ENCODE measurements at regions of chr12 and their contacts with region 1.

Region 1: DNA sequence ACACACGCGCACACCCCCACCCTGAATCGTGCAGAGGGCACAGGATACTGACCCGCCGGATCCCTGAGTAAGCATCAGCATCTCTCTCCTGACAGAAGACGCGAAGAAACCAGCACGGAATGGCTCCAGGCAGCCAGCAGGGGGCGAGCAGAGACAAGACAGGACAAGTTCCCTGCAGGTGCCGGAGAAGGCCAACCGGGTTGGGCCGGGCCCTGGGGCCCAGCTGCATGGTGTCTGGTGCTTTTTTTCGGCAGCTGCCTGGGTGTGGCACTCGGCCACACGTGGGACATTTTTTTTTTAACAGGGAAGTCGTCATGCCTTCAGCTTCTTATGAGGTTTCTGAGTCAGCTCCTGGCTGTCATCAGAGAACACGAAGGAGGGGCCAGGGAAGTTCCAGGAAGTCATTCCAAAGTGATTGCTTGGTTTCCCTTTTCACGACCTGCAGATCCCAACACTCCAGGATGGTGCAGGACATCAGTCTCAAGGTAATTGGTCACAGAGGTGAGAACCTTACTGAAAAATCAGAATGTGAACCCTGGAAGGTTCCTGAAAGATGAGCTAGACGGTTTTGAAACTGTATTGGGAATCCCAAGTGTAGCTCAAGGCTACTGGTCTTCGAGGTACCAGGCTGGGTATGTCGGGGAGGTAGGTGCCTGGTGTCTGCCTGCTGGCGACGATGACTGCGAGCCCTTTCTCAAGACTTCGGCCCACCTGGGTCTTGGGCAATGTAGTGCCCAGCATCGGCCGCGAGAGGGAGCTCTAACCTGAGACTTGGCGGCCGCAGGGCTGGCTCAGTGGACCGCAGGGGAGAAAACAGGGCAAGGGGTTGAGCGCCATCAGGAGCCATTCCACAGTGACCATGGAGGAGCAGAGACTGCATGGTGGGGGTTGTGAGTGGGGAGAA is 190.8 kb upstream of the PRMT8 start:
- DNase-seq: peak; percentile 89
- H3K4me3 ChIP-seq: peak overlapping the region; percentile 15 to 56; a peak in 3 of 4 replicates
- H3K27ac ChIP-seq: peak overlapping the region in 1 of 2 experiments; percentile 69; a peak in 2 of 4 replicates
- H3K4me1 ChIP-seq: peaks cover 4 to 39% of the 10 kb centered on the region in 2 experiments; a peak in 3 of 4 replicates
- H3K27me3 ChIP-seq: no peaks in the 10 kb centered on the region
- CTCF ChIP-seq: peak; percentile 93
- EP300 ChIP-seq: peak in 1 of 2 experiments; percentile 51; a peak in 1 of 4 replicates
- RAD21 ChIP-seq: peak; percentile 87

Region 2: GRCh38 chr12:2779281-2779680 is 520.9 kb before region 1 on chr12:
- CTCF ChIA-PET with region 1: no interaction called
- POLR2A ChIA-PET with region 1: no interaction called
- DNase-seq: no peak
- H3K4me3 ChIP-seq: no peak overlapping the region
- H3K27ac ChIP-seq: no peak overlapping the region
- H3K4me1 ChIP-seq: peaks cover 0 to 3% of the 10 kb centered on the region in 2 experiments; a peak in 1 of 4 replicates
- H3K27me3 ChIP-seq: peaks cover 9% of the 10 kb centered on the region
- CTCF ChIP-seq: no peak
- EP300 ChIP-seq: no peak
- RAD21 ChIP-seq: no peak

Region 3: DNA sequence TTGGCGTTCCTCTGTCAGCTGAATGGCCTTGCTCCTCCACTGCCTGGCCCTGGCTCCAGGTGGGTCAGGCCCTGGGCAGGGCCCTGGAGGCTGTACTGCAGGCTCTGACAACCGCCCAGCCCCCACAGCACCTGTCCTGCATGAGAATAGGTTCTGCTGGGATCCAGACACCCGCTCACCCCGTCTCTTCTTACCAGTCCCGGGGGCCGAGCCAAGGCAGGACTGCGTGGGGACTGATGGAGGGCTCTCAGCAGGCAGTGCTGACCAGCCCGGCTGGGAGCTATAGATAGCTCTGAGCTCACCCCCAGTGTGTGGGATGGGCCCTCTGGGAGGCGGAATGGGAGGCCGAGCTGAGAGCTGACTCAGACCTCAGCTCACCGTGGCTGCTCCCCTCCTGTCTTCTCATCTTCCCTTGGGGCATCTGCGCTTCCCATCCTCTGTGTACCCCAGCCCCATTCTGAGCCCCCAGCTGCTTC is 301.4 kb before region 1 on chr12:
- CTCF ChIA-PET with region 1: no interaction called
- POLR2A ChIA-PET with region 1: no interaction called
- DNase-seq: no peak
- H3K4me3 ChIP-seq: no peak overlapping the region
- H3K27ac ChIP-seq: peak overlapping the region in 1 of 2 experiments; percentile 35; a peak in 2 of 4 replicates
- H3K4me1 ChIP-seq: peaks cover 5 to 6% of the 10 kb centered on the region in 2 experiments; a peak in 2 of 4 replicates
- H3K27me3 ChIP-seq: no peaks in the 10 kb centered on the region
- CTCF ChIP-seq: no peak
- EP300 ChIP-seq: no peak
- RAD21 ChIP-seq: no peak

Region 4: DNA sequence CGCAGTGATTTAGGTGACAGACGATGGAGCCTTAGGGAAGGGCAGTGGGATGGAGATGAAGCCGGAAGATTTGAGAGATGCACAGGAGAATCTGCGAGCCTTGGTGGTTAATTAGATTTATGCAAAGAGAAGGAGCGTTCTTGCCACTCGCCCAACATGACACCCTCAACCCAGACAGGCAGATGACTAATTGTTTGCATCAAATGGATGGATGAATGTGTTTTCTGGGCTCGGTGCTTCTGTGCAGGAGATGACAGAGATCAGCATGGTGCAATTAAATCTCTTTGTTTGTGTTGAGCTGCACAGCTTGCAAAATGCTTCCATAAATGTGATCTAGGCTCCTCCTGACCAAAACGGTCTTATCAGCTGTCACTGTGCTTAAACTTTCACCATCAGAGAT is 11.5 kb before region 1 on chr12:
- CTCF ChIA-PET with region 1: interaction called, 188 read pairs
- POLR2A ChIA-PET with region 1: no interaction called
- DNase-seq: no peak
- H3K4me3 ChIP-seq: no peak overlapping the region
- H3K27ac ChIP-seq: no peak overlapping the region
- H3K4me1 ChIP-seq: peaks cover 0 to 12% of the 10 kb centered on the region in 2 experiments; a peak in 1 of 4 replicates
- H3K27me3 ChIP-seq: no peaks in the 10 kb centered on the region
- CTCF ChIP-seq: no peak
- EP300 ChIP-seq: no peak
- RAD21 ChIP-seq: no peak

Region 5: DNA sequence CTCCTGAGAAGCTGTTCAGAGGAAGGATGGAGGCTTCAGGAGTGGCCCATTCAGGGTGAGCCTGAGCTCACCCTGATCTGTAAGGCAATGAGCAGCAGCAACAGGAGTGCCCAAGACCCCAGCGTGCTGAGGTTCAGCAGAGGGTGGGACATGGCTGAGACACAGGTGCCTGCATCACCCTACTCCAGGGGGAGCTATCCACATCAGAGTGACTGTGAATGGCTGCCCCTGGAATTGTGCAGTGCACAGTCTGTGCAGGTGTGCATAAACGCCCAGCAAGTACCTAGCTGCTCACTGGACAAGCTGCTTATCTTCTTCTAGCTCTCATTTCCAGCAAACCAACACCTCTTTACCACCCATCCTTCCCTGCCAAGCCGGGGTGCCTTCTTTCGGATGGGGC is 50.2 kb after region 1 on chr12:
- CTCF ChIA-PET with region 1: interaction called, 19 read pairs
- POLR2A ChIA-PET with region 1: no interaction called
- DNase-seq: no peak
- H3K4me3 ChIP-seq: no peak overlapping the region
- H3K27ac ChIP-seq: no peak overlapping the region
- H3K4me1 ChIP-seq: no peaks in the 10 kb centered on the region
- H3K27me3 ChIP-seq: no peaks in the 10 kb centered on the region; the same call in 1 of the 2 replicates
- CTCF ChIP-seq: no peak
- EP300 ChIP-seq: no peak
- RAD21 ChIP-seq: no peak

Region 6: GRCh38 chr12:3520168-3520567 is 220.0 kb after region 1 on chr12:
- CTCF ChIA-PET with region 1: interaction called, 14 read pairs
- POLR2A ChIA-PET with region 1: no interaction called
- DNase-seq: peak; percentile 44
- H3K4me3 ChIP-seq: no peak overlapping the region
- H3K27ac ChIP-seq: no peak overlapping the region
- H3K4me1 ChIP-seq: no peaks in the 10 kb centered on the region
- H3K27me3 ChIP-seq: no peaks in the 10 kb centered on the region; the same call in 1 of the 2 replicates
- CTCF ChIP-seq: no peak
- EP300 ChIP-seq: no peak
- RAD21 ChIP-seq: no peak

Region 7: DNA sequence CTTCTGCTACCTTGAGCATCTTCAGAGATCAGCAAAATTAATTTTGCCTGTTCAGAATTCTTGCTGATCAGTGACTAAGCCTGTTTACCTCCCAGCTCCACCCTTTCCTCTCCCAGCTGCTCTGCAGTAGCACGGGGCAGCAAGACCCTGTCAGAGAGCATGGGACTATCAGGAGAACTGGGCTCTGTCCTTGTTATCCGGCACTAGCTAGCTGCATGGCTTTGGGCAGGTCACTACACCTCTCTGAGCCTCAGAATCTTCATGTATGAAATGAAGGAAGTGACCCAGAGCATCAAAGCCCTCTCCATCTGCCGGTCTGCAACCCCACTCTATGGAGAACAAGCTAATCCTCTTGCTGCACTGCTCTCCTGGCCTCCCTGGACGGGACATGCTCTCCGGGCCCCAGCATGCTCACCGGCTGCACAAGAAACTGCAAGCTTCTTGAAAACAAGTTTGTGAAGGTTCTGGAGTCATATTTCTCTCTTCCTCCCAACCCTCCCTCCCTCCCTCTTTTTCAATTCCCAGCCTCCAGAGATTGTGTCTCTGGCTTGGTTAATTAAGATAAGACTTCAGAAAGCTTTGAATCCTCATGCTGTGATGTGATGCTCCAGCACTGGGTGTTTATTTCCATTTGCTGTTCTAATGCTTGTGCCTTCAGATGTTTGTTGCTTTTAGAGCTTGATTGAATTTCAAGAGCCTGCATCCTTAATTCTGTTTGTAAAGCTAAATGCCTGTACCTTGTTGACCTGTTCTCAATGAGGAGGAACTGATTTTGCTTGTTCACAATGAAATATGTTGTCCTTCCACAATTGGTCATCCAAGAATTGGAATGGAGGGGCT is 351.6 kb after region 1 on chr12:
- CTCF ChIA-PET with region 1: interaction called, 18 read pairs
- POLR2A ChIA-PET with region 1: no interaction called
- DNase-seq: peak; percentile 39
- H3K4me3 ChIP-seq: no peak overlapping the region
- H3K27ac ChIP-seq: no peak overlapping the region
- H3K4me1 ChIP-seq: peaks cover 8 to 10% of the 10 kb centered on the region in 2 experiments; a peak in 1 of 4 replicates
- H3K27me3 ChIP-seq: no peaks in the 10 kb centered on the region; the same call in 1 of the 2 replicates
- CTCF ChIP-seq: no peak
- EP300 ChIP-seq: no peak
- RAD21 ChIP-seq: no peak

Region 8: DNA sequence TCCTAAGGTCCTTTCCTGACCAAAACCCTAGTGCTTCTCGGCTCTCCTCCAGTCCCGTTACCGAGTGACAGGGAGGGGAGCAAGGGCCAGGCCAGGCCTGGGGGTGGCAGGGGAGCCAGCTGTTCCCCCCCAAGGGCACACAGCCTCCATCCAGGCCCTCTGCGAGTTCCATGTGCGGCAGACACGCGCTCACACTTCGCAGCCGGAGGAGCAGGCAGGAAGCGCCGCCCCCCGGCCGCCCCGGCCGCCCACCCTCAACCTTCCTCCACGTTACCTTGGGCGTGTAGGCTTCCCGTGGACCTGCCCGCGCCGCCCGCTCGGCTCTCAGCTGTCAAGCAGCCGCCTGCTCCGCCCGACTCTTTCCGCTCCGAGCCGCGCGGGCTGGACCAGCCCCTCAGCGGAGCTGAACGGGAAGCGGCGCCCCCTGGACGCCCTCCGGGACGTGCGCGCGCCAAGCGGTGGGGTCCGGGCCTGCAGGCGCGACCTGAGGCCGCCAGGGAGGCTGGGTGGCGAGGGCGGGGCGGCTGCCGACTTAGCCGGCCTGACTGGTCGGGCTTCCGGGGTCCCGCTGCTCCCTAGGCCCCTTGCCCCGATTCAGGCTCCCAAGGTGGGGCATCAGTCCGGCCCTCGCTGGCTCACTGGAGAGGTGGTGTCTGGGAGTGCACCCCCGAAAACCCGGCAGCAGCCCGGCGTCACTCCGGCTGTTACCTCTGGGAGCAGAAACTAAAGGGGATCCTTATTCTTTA is 452.7 kb after region 1 on chr12 and contains the start of gene CRACR2A:
- CTCF ChIA-PET with region 1: interaction called, 12 read pairs
- POLR2A ChIA-PET with region 1: no interaction called
- DNase-seq: peak; percentile 90
- H3K4me3 ChIP-seq: peak within 1 kb of the TSS; percentile 30 to 32; a peak in 3 of 4 replicates
- H3K27ac ChIP-seq: no peak within 1 kb of the TSS
- H3K4me1 ChIP-seq: peaks cover 0 to 2% of the 10 kb centered on the region in 2 experiments; a peak in 1 of 4 replicates
- H3K27me3 ChIP-seq: no peaks in the 10 kb centered on the region
- CTCF ChIP-seq: peak; percentile 33; the same call in 1 of the 2 replicates
- EP300 ChIP-seq: no peak
- RAD21 ChIP-seq: peak; percentile 28; the same call in 1 of the 2 replicates
- polyA plus RNA-seq, gene CRACR2A: 0.05 and 0.12 TPM in 2 replicates

Region 9: DNA sequence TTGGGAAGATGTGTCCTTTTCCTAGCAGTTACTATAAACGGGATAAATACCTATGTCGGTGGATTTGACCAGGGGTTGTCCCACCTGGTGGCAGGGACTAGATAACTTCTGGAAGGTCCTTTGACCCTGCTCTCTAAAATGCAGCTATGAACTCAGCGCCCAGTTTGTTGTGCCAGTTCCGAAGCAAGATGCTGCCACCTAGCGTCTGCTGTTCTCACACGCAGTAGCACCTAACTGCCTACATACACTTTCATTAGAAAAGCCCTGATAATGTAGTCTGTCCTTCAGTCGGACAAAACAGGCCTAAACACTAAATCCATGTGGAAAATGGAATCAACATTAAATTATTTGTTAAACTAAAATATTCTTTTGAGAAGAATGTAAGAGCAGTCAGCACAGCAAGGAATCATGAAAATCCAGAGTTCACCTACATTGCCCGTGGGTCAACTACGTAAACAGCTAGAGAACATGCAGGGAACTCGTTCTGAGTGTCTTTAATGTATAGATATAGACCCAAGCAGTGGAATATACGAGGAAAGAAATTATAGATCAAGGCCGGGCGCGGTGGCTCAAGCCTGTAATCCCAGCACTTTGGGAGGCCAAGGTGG is 503.8 kb after region 1 on chr12:
- CTCF ChIA-PET with region 1: interaction called, 231 read pairs
- POLR2A ChIA-PET with region 1: no interaction called
- DNase-seq: peak; percentile 52
- H3K4me3 ChIP-seq: no peak overlapping the region; a peak in 1 of 4 replicates
- H3K27ac ChIP-seq: no peak overlapping the region
- H3K4me1 ChIP-seq: peaks cover 0 to 8% of the 10 kb centered on the region in 2 experiments; a peak in 1 of 4 replicates
- H3K27me3 ChIP-seq: no peaks in the 10 kb centered on the region
- CTCF ChIP-seq: peak; percentile 96
- EP300 ChIP-seq: no peak
- RAD21 ChIP-seq: peak; percentile 89

Measured in SK-N-SH (cell line).